AG04450 (cell line): ENCODE measurements at regions of chr9 and their contacts with region 1.

Region 1: DNA sequence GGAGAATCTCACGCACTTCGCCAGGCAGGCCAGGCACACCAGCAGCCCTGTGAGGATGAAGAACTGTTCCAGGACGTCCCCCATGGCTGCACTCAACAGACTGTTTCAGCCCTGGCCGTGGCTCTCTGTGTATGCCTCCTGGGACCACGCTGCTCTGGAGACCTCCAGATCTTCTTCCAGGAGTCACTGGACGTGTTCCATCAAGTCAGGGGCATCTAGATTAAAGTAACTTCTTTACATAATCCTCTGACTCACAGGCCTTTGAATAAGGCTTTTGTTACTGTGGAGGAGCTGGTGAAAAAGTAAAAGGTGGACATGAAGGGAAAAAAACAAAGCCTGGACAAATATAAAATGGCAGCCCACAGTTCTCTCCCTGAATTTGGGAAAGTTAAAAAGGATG is at the start of gene HSD17B3:
- DNase-seq: no peak
- H3K4me3 ChIP-seq: no peak within 1 kb of the TSS
- H3K27ac ChIP-seq: no peak within 1 kb of the TSS
- H3K27me3 ChIP-seq: peaks cover 9% of the 10 kb centered on the region
- CTCF ChIP-seq: no peak
- polyA plus RNA-seq, gene HSD17B3: 0.12 TPM in 1 of 2 replicates, not detected in the other

Region 2: DNA sequence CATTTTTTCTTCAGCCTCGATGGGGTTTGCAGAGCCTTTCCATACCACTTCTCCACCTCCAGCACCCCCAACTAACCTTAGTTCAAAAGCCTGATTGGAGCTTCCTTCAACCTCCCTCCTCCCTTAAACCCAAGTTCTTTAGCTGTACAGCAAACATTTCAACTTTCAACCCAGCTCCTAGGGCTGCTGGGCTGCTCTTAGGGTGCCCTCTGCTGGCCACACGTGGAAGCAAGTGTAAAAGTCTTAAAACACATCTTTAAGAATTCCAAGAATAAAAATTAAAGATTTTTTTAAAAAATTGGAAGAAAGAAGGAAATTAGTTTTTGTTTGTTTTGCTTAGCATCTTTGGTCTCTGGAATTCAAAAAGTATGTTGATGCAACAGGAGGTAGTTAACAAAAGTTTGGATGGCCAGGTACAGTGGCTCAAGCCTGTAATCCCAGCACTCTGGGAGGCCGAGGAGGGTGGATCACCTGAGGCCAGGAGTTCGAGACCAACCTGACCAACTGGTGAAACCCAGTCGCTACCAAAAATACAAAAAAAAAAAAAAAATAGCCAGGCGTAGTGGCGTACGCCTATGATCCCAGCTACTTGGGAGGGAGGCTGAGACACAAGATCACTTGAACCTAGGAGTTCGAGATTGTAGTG is 15.4 kb after region 1 on chr9:
- CTCF ChIA-PET with region 1: interaction called, 30 read pairs
- POLR2A ChIA-PET with region 1: no interaction called
- DNase-seq: peak; percentile 32
- H3K4me3 ChIP-seq: no peak overlapping the region
- H3K27ac ChIP-seq: no peak overlapping the region
- H3K27me3 ChIP-seq: no peaks in the 10 kb centered on the region
- CTCF ChIP-seq: peak; percentile 98

Region 3: DNA sequence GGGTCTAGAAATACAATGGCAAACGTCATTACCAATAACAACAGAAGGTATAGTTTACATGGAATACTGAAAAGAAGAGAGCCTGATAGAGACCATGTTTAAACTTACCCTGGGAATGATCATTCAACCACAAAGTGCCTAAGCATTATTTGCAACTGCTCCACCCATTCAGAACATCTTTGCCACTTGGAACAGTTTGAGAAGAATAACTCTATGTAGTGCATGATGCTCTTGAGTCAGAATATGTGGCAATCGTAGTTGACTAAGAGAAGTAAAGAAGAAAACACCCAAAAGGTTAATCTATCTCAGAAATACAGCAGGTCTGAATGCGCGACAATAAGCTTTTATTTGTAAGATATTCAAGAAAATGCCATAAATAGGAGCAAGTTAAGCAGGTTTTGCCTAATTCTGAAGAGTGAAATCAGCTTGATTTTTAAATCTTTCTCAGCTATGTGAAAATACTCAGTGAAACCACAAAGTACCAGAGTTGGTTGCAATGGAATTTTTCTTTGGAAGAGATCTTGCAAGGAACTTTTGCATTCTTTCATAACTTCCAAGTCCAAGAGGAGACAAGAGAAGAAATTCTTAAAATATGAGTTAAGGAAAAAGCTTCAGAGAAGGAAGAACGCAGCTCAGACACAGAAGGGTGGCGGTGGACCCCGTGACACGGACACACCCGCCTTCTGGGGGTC is 212.2 kb after region 1 on chr9:
- CTCF ChIA-PET with region 1: no interaction called
- POLR2A ChIA-PET with region 1: no interaction called
- DNase-seq: no peak
- H3K4me3 ChIP-seq: no peak overlapping the region
- H3K27ac ChIP-seq: peak overlapping the region; percentile 68
- H3K27me3 ChIP-seq: no peaks in the 10 kb centered on the region
- CTCF ChIP-seq: no peak

Region 4: DNA sequence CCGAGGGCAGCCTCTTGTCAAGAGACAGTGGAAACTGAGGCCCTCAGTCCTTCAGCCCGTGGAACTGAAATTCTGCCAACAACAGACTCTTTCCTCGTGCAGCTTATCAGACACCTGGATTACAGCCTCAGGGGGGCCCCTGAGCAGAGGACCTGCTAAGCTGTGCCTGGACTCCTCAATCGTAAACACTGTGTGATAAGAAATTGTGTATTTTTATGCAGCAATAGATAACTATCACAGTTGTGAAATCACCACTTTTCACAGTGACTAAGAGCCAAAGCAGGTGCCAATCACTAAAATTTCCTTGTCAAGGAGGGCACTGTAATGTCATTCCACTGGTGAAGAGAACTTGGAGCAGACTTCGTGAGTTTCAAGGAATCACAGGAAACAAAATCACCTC is 770.3 kb after region 1 on chr9:
- CTCF ChIA-PET with region 1: no interaction called
- POLR2A ChIA-PET with region 1: no interaction called
- DNase-seq: no peak
- H3K4me3 ChIP-seq: no peak overlapping the region
- H3K27ac ChIP-seq: no peak overlapping the region
- H3K27me3 ChIP-seq: no peaks in the 10 kb centered on the region
- CTCF ChIP-seq: no peak